Naive thymus-derived CD8-positive, alpha-beta T cell (primary cell): ENCODE measurements at regions of chr12 and their contacts with region 1.

Region 1: GRCh38 chr12:54398995-54399793 is 14.7 kb upstream of the ZNF385A start:
- DNase-seq: peak; percentile 77 to 96 (median 87)
- ATAC-seq: peak; percentile 94 to 99
- H3K4me3 Mint-ChIP-seq: no peak overlapping the region
- H3K27ac Mint-ChIP-seq: peak overlapping the region in 8 of 10 donors; percentile 0 to 74 (median 36)
- H3K4me1 Mint-ChIP-seq: peaks cover 5 to 10% (median 10%) of the 10 kb centered on the region in 4 donors
- H3K27me3 Mint-ChIP-seq: no peaks in the 10 kb centered on the region

Region 2: DNA sequence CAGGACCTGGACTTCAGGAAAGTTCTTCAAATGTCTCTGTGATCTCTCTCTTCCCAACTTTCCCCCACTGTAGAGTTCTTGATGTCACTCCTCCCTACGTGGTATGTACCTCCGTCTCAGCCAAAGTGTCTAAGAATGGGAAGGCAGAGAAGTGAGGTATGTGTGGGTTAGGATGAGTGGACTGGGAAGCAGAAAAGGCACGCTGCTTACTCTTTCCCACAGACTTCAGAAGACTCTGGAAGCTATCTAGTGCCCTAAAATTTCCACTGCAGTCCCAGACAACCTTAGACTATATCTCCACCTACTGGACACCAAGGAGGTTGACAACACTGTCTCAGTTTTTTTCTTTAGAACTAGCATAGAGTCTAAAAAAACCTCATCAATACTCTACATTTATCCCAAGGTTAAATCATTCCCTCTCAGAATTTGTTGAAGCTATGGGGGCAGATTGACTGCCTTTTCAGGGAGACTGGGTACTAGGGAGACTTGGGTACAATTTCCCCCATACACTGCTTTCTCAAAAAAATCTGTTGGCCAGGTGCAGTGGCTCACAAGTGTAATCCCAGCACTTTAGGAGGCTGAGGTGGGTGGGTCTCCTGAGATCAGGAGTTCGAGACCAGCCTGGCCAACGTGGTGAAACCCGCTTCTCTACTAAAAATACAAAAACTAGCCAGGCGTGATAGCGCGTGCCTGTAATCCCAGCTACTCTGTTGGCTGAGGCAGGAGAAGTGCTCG is 40.5 kb after region 1 on chr12:
- POLR2A ChIA-PET with region 1: interaction called, 61 read pairs
- DNase-seq: peak in 3 of 10 donors; percentile 63 to 74 (median 66)
- ATAC-seq: peak; percentile 79 to 93
- H3K4me3 Mint-ChIP-seq: no peak overlapping the region
- H3K27ac Mint-ChIP-seq: peak overlapping the region in 8 of 10 donors; percentile 12 to 83 (median 66)
- H3K4me1 Mint-ChIP-seq: peaks cover 4 to 9% (median 7%) of the 10 kb centered on the region in 4 donors
- H3K27me3 Mint-ChIP-seq: no peaks in the 10 kb centered on the region